Thyroid gland (tissue), 4 donors: ENCODE measurements at regions of chr9 and their contacts with region 1.

Region 1: GRCh38 chr9:17807613-17808282 is 228.9 kb downstream of the SH3GL2 start:
- DNase-seq: no peak
- H3K4me3 ChIP-seq: no peak overlapping the region
- H3K27ac ChIP-seq: no peak overlapping the region
- H3K4me1 ChIP-seq: no peaks in the 10 kb centered on the region
- H3K27me3 ChIP-seq: no peaks in the 10 kb centered on the region
- CTCF ChIP-seq: no peak
- POLR2A ChIP-seq: no peak

Region 2: GRCh38 chr9:18208154-18209059 is 400.7 kb after region 1 on chr9:
- intact Hi-C with region 1: loop called (anchors 5 kb)
- DNase-seq: peak; percentile 30 to 41
- H3K4me3 ChIP-seq: no peak overlapping the region
- H3K27ac ChIP-seq: no peak overlapping the region
- H3K4me1 ChIP-seq: no peaks in the 10 kb centered on the region
- H3K27me3 ChIP-seq: no peaks in the 10 kb centered on the region
- CTCF ChIP-seq: peak in 4 of 6 experiments; percentile 12 to 52 (median 34)
- POLR2A ChIP-seq: no peak